Uterus (tissue), 4 donors: ENCODE measurements at regions of chr12 and their contacts with region 1.

Region 1: DNA sequence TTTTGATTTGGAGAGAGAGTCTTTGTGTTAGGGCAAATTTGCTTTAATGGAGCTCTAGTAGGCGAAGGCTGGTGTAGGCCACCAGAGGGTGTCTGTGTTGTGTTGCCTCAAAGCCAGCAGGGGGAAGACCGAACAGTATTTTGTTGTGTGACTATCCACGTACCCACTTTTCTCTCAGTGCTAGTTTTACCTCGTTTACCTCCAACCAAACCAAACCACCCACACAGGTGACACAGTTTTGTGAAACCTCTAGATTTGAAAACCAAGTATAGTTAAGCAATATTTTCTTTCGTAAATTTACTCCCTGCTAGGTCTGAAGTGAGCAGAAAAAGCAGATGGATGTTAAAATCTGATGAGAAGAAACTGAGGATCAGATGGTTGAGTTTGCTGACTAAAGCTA is 36.3 kb upstream of the NPFF start:
- DNase-seq: peak; percentile 61 to 66
- H3K4me3 ChIP-seq: no peak overlapping the region
- H3K27ac ChIP-seq: peak overlapping the region; percentile 66 to 85
- H3K4me1 ChIP-seq: no peaks in the 10 kb centered on the region
- H3K27me3 ChIP-seq: no peaks in the 10 kb centered on the region
- CTCF ChIP-seq: peak; percentile 82 to 95 (median 92)
- POLR2A ChIP-seq: no peak

Region 2: GRCh38 chr12:53451661-53452158 is 91.8 kb before region 1 on chr12 and contains the start of gene PCBP2:
- intact Hi-C with region 1: no loop called
- DNase-seq: peak; percentile 98
- H3K4me3 ChIP-seq: peak within 1 kb of the TSS; percentile 61 to 80
- H3K27ac ChIP-seq: peak within 1 kb of the TSS; percentile 94 to 98
- H3K4me1 ChIP-seq: peaks cover 4 to 12% of the 10 kb centered on the region in 2 donors
- H3K27me3 ChIP-seq: no peaks in the 10 kb centered on the region
- CTCF ChIP-seq: peak; percentile 84 to 97 (median 93)
- POLR2A ChIP-seq: peak; percentile 69 to 78
- total RNA-seq, gene PCBP2: 364 to 929 (median 383) TPM

Region 3: DNA sequence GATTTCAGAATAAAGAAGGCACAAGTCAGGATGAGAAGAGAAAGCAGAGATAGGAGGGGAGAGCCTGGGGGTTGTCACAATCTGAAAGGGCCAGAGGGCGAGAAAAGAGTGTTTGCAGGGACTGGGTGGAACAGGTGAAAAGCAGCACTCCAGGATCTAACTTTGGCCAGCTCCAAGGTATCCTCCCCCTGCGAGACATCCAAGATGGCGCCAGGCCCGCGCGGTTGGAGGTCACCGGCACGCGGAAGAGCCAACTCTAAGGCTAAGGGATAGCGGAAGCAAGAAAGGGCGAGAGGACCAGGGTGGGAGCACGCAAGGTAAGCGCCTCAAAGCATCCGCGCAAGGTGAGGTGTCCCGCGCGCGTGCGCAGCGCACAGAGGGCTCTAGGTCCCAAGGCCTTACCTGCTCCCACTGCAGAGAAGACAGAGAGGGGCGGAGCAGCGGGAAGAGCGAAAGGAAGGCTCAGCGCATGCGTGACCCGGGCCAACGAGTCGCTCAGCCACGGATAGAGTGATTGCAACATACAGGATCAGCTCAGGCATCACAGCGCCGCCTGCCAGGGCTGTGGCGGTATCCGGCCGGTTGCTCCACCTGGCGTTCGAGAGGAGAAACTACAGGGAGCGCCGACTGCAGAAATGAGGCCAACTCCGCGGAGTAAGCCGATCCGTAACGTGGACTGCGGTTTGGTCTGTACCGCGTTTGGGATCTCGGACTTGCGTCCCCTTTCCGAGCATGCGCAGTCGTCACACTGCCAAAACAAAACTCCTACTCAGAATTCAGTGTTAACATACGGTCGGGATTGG is 132.3 kb after region 1 on chr12 and contains the start of gene ATP5MC2:
- intact Hi-C with region 1: loop called (anchors 5 kb)
- DNase-seq: peak; percentile 97 to 98
- H3K4me3 ChIP-seq: peak within 1 kb of the TSS; percentile 66 to 84
- H3K27ac ChIP-seq: peak within 1 kb of the TSS; percentile 92 to 97
- H3K4me1 ChIP-seq: peaks cover 0 to 6% of the 10 kb centered on the region in 2 donors
- H3K27me3 ChIP-seq: no peaks in the 10 kb centered on the region
- CTCF ChIP-seq: peak; percentile 97 to 100 (median 98)
- POLR2A ChIP-seq: peak; percentile 55 to 70
- total RNA-seq, gene ATP5MC2: 68.9 to 215 (median 133) TPM